ENCODE measurements at regions of chr11 and their contacts with region 1.

Region 1: DNA sequence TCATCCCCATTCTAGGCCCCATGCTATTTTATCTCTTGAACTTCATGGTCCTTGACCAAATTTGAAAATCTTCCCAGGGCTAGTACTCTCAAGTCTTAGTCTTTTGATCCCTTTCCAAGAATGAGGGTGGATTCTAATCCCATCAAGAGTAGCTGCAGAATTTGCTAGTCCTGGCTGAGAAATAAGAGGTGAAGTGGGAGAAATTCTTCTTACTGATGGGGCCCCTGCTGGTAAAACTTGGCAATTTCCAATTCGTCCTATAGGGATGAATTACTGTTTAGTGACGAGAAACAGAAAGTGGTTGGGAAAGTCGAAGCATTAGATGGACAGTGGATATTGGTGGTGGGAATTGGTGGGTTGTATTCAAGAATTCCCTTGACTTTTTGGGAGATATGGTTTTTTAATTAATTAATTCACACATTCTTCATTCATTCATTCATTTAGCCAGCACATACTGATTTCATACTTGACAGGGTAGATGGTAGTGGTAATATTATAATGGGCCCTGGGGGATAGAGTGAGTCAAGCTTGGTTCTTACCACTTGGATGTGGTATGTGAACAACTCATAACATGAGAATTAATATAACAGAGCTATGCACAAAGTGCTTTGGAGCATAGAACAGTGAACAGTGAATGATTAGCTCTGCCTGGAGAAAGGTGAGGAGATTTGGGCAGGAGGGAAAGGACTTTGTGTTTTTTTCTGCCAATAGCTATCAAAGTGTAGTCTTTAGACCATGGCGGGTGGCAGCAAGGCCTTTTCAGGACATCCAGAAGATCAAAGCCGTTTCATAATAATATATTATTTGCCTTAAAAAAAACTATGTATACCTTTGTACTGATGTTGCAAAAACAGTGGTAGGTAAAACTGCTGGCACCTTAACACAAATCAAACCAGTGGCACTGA is 103.8 kb downstream of the STIM1 start:
- DNase-seq: peak; percentile 5
- H3K4me3 Mint-ChIP-seq: no peak overlapping the region
- H3K27ac Mint-ChIP-seq: no peak overlapping the region
- H3K4me1 Mint-ChIP-seq: peaks cover 28% of the 10 kb centered on the region
- H3K27me3 Mint-ChIP-seq: no peaks in the 10 kb centered on the region
- CTCF ChIP-seq: no peak

Region 2: GRCh38 chr11:3920148-3920852 is 39.0 kb before region 1 on chr11:
- CTCF ChIA-PET with region 1: interaction called, 3 read pairs
- intact Hi-C with region 1: loop called (anchors 5 kb)
- DNase-seq: peak; percentile 31
- H3K4me3 Mint-ChIP-seq: no peak overlapping the region
- H3K27ac Mint-ChIP-seq: peak overlapping the region; percentile 67
- H3K4me1 Mint-ChIP-seq: peaks cover 21% of the 10 kb centered on the region
- H3K27me3 Mint-ChIP-seq: no peaks in the 10 kb centered on the region
- CTCF ChIP-seq: no peak